Caco-2 (cell line): ENCODE measurements at regions of chr3 and their contacts with region 1.

Region 1: GRCh38 chr3:117193390-117193789 is 483.8 kb downstream of the TUSC7 start:
- DNase-seq: peak in 1 of 2 experiments; percentile 4
- H3K4me3 ChIP-seq: no peak overlapping the region
- H3K4me3 Mint-ChIP-seq: no peak overlapping the region
- H3K27ac Mint-ChIP-seq: no peak overlapping the region
- H3K4me1 ChIP-seq: no peaks in the 10 kb centered on the region
- H3K4me1 Mint-ChIP-seq: no peaks in the 10 kb centered on the region
- H3K27me3 ChIP-seq: no peaks in the 10 kb centered on the region
- H3K27me3 Mint-ChIP-seq: no peaks in the 10 kb centered on the region
- CTCF ChIP-seq: peak; percentile 30 to 38

Region 2: GRCh38 chr3:117059067-117059955 is 134.1 kb before region 1 on chr3:
- CTCF ChIA-PET with region 1: no interaction called
- POLR2A ChIA-PET with region 1: no interaction called
- intact Hi-C with region 1: loop called (anchors 2 kb)
- DNase-seq: peak in 1 of 2 experiments; percentile 3
- H3K4me3 ChIP-seq: no peak overlapping the region
- H3K4me3 Mint-ChIP-seq: no peak overlapping the region
- H3K27ac Mint-ChIP-seq: no peak overlapping the region
- H3K4me1 ChIP-seq: 0 out of 2 replicates have a peak, but pooled peaks cover 3% of the 10 kb centered on the region
- H3K4me1 Mint-ChIP-seq: no peaks in the 10 kb centered on the region
- H3K27me3 ChIP-seq: no peaks in the 10 kb centered on the region
- H3K27me3 Mint-ChIP-seq: peaks cover 3% of the 10 kb centered on the region
- CTCF ChIP-seq: peak; percentile 17 to 36

Region 3: GRCh38 chr3:117149584-117149983 is 43.8 kb before region 1 on chr3:
- CTCF ChIA-PET with region 1: no interaction called
- POLR2A ChIA-PET with region 1: no interaction called
- intact Hi-C with region 1: loop called (anchors 2 kb)
- DNase-seq: no peak
- H3K4me3 ChIP-seq: no peak overlapping the region
- H3K4me3 Mint-ChIP-seq: no peak overlapping the region
- H3K27ac Mint-ChIP-seq: no peak overlapping the region
- H3K4me1 ChIP-seq: no peaks in the 10 kb centered on the region
- H3K4me1 Mint-ChIP-seq: peaks cover 6% of the 10 kb centered on the region
- H3K27me3 ChIP-seq: no peaks in the 10 kb centered on the region
- H3K27me3 Mint-ChIP-seq: peaks cover 6% of the 10 kb centered on the region
- CTCF ChIP-seq: no peak